MCF 10A (cell line): ENCODE measurements at regions of chr16 and their contacts with region 1.

Region 1: DNA sequence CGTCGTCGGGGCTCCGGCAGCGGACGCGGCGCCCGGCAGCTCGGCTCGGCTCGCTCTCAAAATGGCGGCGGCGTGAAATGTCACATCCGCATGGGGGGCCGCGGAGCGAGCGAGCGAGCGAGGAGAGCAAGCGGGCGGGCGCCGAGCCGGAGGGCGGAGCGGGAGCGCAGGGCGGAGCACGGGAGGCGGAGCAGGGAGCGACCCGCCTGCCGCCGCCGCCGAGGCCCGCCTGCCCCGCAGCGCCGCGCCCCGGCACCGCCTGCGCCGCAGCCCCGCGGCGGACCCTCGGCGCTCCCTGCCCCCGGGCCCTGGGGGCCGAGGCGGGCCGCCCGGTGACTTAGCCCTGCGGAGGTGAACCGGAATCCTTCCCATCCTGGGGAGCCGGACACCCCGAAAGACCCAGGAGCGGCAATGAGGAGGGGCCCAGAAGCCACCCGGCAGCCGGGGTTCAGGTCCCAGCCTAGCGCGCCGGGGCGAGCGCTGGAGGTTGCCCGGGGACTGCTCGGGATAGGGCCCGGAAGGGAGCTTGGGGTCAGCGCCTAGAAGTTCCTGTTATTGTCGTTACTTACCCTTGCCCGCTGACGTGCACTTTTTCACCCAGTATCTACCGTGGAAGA is at the start of gene USP7:
- DNase-seq: peak; percentile 90
- H3K4me3 Mint-ChIP-seq: peak within 1 kb of the TSS; percentile 98
- H3K27ac Mint-ChIP-seq: peak within 1 kb of the TSS; percentile 81
- H3K4me1 Mint-ChIP-seq: peaks cover 32% of the 10 kb centered on the region
- H3K27me3 Mint-ChIP-seq: no peaks in the 10 kb centered on the region
- CTCF ChIP-seq: no peak
- total RNA-seq, gene USP7: 81.2 and 108 TPM in 2 replicates

Region 2: GRCh38 chr16:8855011-8855786 is 108.7 kb before region 1 on chr16:
- CTCF ChIA-PET with region 1: no interaction called
- POLR2A ChIA-PET with region 1: no interaction called
- intact Hi-C with region 1: no loop called
- DNase-seq: no peak
- H3K4me3 Mint-ChIP-seq: no peak overlapping the region
- H3K27ac Mint-ChIP-seq: no peak overlapping the region
- H3K4me1 Mint-ChIP-seq: peaks cover 13% of the 10 kb centered on the region
- H3K27me3 Mint-ChIP-seq: no peaks in the 10 kb centered on the region
- CTCF ChIP-seq: peak; percentile 23

Region 3: GRCh38 chr16:8989099-8989878 is 25.4 kb after region 1 on chr16:
- CTCF ChIA-PET with region 1: no interaction called
- POLR2A ChIA-PET with region 1: no interaction called
- intact Hi-C with region 1: no loop called
- DNase-seq: no peak
- H3K4me3 Mint-ChIP-seq: no peak overlapping the region
- H3K27ac Mint-ChIP-seq: no peak overlapping the region
- H3K4me1 Mint-ChIP-seq: no peaks in the 10 kb centered on the region
- H3K27me3 Mint-ChIP-seq: no peaks in the 10 kb centered on the region
- CTCF ChIP-seq: no peak

Region 4: DNA sequence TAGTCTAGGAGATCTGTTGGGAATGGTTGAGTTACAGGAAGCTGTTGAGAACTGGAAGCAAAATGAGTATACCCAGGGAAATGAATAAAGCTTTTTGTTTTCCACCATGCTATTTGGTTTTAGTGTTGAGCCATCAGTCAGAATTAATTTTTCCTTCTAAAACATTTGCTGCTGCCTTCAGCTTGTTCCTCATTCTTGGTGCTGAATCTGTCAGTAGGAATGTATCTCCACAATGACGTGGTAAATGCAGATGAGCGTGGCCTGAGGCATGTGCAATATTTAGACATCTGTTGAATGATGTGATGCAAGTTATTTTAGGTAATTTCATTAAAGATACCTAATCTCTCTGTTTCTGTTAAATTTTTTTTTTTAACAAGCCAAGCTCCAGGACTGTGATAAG is 138.4 kb after region 1 on chr16:
- CTCF ChIA-PET with region 1: interaction called, 3 read pairs
- POLR2A ChIA-PET with region 1: interaction called, 3 read pairs
- intact Hi-C with region 1: loop called (anchors 10 kb)
- DNase-seq: no peak
- H3K4me3 Mint-ChIP-seq: no peak overlapping the region
- H3K27ac Mint-ChIP-seq: peak overlapping the region; percentile 64
- H3K4me1 Mint-ChIP-seq: peaks cover 37% of the 10 kb centered on the region
- H3K27me3 Mint-ChIP-seq: no peaks in the 10 kb centered on the region
- CTCF ChIP-seq: no peak